ENCODE measurements at regions of chr5 and their contacts with region 1.

Region 1: DNA sequence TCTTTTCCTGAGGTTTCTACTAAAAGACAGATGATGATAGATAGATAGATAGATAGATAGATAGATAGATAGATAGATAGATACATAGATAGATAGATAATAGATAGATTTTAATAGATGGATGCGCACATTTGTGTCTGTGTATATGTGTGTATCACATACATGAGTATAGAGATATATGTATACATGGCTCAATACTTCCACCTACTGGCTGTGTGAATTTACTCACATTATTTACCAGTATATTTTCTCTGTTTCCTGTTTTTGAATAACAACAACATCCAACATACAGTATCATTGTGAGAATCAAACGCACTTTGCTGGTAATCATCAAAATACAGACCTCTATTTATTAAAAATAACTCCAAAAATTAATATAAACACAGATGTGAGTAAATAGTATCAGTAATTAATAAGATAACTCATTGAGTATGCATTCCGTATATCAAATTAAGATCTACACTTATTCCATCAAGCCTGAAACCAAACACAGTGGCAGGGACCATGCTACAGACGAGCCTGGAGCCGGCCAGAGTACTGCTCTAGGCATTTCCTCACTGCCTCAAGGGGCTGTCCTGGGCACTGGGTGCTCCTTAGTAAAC is 338.0 kb downstream of the SEMA5A start:
- DNase-seq: no peak
- ATAC-seq: no peak
- H3K4me3 Mint-ChIP-seq: no peak overlapping the region
- H3K27ac Mint-ChIP-seq: no peak overlapping the region
- H3K4me1 Mint-ChIP-seq: no peaks in the 10 kb centered on the region
- H3K27me3 Mint-ChIP-seq: no peaks in the 10 kb centered on the region
- CTCF ChIP-seq: no peak

Region 2: DNA sequence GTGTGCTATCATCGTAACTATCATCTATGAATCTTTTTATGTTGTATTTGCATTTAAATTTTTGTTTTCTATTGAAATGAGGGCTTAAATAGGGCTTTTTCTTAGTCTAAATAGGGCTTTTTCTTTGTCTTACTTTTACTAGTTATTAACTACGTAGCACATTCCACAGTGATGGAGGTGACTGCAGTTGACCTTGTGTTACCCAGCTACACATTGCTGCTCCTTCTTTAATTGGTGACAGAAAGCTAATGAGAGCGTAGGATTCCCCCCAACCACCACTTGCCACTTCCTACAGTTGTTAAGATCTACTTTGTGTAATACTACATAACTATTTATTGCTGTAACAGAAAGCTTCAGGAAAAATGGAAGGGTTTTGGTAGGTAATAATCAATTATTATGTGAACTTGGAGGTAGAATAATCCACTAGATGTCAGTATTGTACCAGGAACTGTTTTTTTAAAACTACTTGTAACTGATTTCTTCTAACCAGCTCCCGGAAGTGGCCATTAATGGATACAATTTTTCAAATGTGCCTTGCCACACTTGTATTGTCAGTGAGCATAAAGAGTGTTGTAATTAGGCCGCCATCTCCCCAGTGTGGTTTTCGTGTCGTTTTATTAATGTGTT is 1321.0 kb before region 1 on chr5:
- CTCF ChIA-PET with region 1: interaction called, 8 read pairs
- POLR2A ChIA-PET with region 1: no interaction called
- intact Hi-C with region 1: loop called (anchors 2 kb)
- DNase-seq: no peak
- ATAC-seq: no peak
- H3K4me3 Mint-ChIP-seq: no peak overlapping the region
- H3K27ac Mint-ChIP-seq: no peak overlapping the region
- H3K4me1 Mint-ChIP-seq: peaks cover 3% of the 10 kb centered on the region
- H3K27me3 Mint-ChIP-seq: no peaks in the 10 kb centered on the region
- CTCF ChIP-seq: no peak

Region 3: DNA sequence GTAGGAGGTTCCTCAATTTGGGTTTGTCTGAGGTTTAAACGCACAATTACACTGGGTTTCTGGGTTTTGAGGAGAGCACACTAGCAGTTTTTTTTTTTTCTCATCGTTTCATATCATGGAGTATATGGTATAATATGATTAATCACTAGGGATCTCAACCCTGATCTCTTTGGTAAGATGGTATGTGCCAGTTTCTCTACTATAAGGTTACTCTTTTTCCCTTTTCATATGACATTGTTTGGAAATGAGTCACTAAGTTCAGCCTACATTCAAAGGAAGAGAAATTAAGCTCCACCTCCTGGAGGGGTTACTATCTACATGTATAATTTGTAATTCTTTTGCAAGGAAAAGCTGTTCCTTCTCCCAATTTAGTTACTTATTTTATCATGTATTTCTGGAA is 1303.7 kb before region 1 on chr5:
- CTCF ChIA-PET with region 1: no interaction called
- POLR2A ChIA-PET with region 1: no interaction called
- intact Hi-C with region 1: no loop called
- DNase-seq: no peak
- ATAC-seq: no peak
- H3K4me3 Mint-ChIP-seq: no peak overlapping the region
- H3K27ac Mint-ChIP-seq: no peak overlapping the region
- H3K4me1 Mint-ChIP-seq: no peaks in the 10 kb centered on the region
- H3K27me3 Mint-ChIP-seq: no peaks in the 10 kb centered on the region
- CTCF ChIP-seq: no peak